Sigmoid colon (tissue), 7 donors: ENCODE measurements at regions of chrX and their contacts with region 1.

Region 1: DNA sequence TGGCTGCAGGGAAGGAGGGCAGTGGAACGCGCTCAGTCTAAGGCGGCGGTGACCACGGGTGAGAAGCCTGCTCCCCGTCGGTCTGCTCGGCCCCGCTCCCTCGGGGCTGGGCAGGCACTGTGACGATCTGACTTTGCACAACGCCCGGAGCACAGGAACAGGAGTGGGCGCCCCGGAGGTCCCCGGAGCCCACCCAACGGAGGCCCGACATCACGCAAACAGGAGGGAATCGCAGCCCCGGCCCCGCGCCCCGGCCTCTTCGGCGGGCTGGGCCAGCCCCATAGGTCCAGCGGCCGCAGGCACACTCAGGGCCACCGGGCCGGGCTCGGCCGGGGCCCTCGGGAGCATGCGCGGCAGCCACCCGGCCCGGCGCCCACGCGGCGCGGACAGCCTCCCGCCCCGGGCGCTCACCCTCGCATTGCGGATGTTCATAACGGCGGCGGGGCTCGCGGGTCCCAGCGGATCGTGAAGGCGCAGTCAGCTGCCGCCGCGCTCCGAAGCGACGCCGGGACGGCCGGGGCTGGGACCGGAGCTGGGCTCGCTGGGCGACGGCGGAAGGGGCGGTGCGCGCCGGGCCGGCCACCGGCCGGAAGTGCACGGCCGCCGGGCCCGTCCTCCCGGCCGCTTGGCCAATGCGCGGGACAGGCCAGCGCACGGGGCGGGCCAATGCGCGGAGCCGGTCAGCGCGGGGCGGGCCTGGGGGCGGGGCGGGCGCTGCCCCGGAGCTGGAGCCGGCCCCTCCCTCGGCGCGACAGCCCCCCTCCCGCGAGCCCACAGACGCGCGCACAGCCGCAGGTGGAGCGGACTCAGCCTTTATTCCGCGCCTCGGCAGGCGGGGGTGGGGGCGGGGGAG is at the start of gene NAA10:
- DNase-seq: peak; percentile 86
- H3K4me3 ChIP-seq: peak within 1 kb of the TSS; percentile 50 to 81 (median 68)
- H3K27ac ChIP-seq: peak within 1 kb of the TSS; percentile 59 to 80 (median 74)
- H3K4me1 ChIP-seq: peaks cover 0 to 16% (median 10%) of the 10 kb centered on the region in 4 donors
- H3K27me3 ChIP-seq: no peaks in the 10 kb centered on the region
- CTCF ChIP-seq: no peak
- EP300 ChIP-seq: no peak
- POLR2A ChIP-seq: no peak
- total RNA-seq, gene NAA10: 57.4 to 113 (median 79.2) TPM

Region 2: DNA sequence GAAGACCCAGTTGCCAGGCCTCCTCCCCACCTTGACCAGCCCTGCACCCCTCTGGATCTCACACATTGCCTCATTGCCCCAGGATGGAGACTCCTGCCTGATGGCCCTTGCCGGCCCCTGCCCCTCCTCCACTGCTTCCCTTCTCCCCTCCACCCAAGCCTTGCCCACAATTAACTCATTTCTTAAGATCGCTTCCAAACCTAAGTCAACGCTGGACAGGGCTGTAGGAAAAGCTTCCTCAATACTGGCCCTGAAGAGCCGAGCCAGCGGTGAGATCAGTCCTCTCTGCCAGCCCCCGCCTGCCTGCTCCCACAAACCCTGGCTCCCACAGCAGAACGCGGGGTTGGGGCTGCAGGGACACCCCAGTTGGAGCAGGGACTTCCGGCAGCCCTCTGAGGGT is 456.8 kb before region 1 on chrX:
- intact Hi-C with region 1: no loop called
- DNase-seq: no peak
- H3K4me3 ChIP-seq: no peak overlapping the region
- H3K27ac ChIP-seq: peak overlapping the region in 1 of 4 donors; percentile 6
- H3K4me1 ChIP-seq: peaks cover 0 to 6% (median 0%) of the 10 kb centered on the region in 4 donors
- H3K27me3 ChIP-seq: no peaks in the 10 kb centered on the region
- CTCF ChIP-seq: no peak
- EP300 ChIP-seq: no peak
- POLR2A ChIP-seq: no peak

Region 3: DNA sequence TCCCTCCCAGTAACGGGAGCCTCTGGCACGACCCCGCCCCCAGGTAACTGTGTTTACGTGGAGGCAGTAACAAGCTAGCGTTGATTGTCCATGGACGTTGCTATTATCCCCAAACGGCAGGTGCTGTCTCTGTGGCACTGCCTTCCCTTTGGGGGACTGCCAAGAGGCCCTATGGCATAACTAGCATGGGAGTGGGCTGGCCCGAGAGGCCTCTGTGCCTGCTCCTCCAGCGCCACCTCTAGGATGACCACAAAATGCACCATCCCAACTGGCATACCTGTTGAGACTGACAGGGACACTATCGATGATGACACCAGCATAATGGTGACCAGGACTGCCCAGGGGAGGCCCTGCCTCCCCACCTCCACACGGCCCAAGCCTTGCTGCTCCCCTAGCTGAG is 152.4 kb before region 1 on chrX:
- intact Hi-C with region 1: loop called (anchors 5 kb)
- DNase-seq: no peak
- H3K4me3 ChIP-seq: peak overlapping the region in 1 of 4 donors; percentile 38
- H3K27ac ChIP-seq: peak overlapping the region in 3 of 4 donors; percentile 85 to 91 (median 88)
- H3K4me1 ChIP-seq: peaks cover 0 to 32% (median 29%) of the 10 kb centered on the region in 4 donors
- H3K27me3 ChIP-seq: peaks cover 0 to 3% (median 0%) of the 10 kb centered on the region in 3 donors
- CTCF ChIP-seq: peak in 1 of 4 experiments; percentile 10
- EP300 ChIP-seq: no peak
- POLR2A ChIP-seq: no peak